CD8-positive, alpha-beta T cell (primary cell): ENCODE measurements at regions of chr4 and their contacts with region 1.

Region 1: GRCh38 chr4:102430461-102430910 is 70.7 kb upstream of the NFKB1 start:
- DNase-seq: peak in 1 of 9 experiments; percentile 19
- ATAC-seq: no peak
- H3K4me3 ChIP-seq: peak overlapping the region; percentile 57 to 58
- H3K4me3 Mint-ChIP-seq: peak overlapping the region; percentile 88
- H3K27ac ChIP-seq: peak overlapping the region; percentile 34 to 55
- H3K27ac Mint-ChIP-seq: no peak overlapping the region
- H3K4me1 ChIP-seq: peaks cover 4% of the 10 kb centered on the region
- H3K4me1 Mint-ChIP-seq: peaks cover 8% of the 10 kb centered on the region
- H3K27me3 ChIP-seq: no peaks in the 10 kb centered on the region
- H3K27me3 Mint-ChIP-seq: no peaks in the 10 kb centered on the region
- CTCF ChIP-seq: no peak

Region 2: GRCh38 chr4:102255454-102255853 is 175.0 kb before region 1 on chr4:
- CTCF ChIA-PET with region 1: interaction called, 6 read pairs
- POLR2A ChIA-PET with region 1: no interaction called
- intact Hi-C with region 1: loop called in 1 of 2 experiments (anchors 5 kb)
- DNase-seq: no peak
- ATAC-seq: no peak
- H3K4me3 ChIP-seq: no peak overlapping the region
- H3K4me3 Mint-ChIP-seq: no peak overlapping the region
- H3K27ac ChIP-seq: no peak overlapping the region
- H3K27ac Mint-ChIP-seq: no peak overlapping the region
- H3K4me1 ChIP-seq: no peaks in the 10 kb centered on the region
- H3K4me1 Mint-ChIP-seq: no peaks in the 10 kb centered on the region
- H3K27me3 ChIP-seq: no peaks in the 10 kb centered on the region
- H3K27me3 Mint-ChIP-seq: no peaks in the 10 kb centered on the region
- CTCF ChIP-seq: no peak

Region 3: DNA sequence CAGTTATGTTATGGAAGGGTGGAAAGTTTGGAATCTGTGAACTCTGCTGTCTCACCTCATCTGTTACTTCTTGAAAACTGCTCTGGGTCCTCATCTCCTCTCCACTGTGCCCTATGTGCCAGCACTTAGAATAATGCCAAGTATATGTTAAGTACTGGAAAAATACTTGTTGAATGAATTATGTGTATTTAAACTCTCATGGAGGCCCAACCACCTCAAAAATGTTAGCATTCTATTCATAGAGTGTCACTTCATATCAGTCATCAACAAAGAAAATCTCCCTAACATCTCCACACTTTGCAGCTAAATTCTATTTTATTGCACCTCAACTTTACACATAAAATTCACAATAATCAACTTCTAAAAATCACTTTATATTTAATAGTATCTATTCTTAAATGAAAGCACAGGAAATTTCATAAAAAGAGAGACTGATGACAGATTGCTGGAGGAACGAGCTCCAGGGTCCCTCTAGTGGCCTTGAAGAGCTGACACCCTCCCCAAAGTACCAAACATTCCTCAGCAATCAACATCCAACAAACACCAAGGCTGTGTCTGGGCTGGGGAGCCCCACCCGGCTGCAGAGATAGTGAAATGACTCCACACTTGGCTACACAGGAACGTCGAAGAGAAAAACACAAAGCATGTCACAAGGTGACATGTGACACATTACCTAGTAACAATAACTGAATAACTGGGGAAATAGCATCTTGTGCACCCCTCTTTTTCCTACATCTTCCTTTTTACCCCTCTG is 131.0 kb before region 1 on chr4:
- CTCF ChIA-PET with region 1: interaction called, 3 read pairs
- POLR2A ChIA-PET with region 1: no interaction called
- intact Hi-C with region 1: loop called in 1 of 2 experiments (anchors 5 kb)
- DNase-seq: peak in 7 of 9 experiments; percentile 2 to 53 (median 27)
- ATAC-seq: peak; percentile 67
- H3K4me3 ChIP-seq: no peak overlapping the region
- H3K4me3 Mint-ChIP-seq: no peak overlapping the region
- H3K27ac ChIP-seq: no peak overlapping the region
- H3K27ac Mint-ChIP-seq: no peak overlapping the region
- H3K4me1 ChIP-seq: no peaks in the 10 kb centered on the region
- H3K4me1 Mint-ChIP-seq: peaks cover 2% of the 10 kb centered on the region
- H3K27me3 ChIP-seq: no peaks in the 10 kb centered on the region
- H3K27me3 Mint-ChIP-seq: no peaks in the 10 kb centered on the region
- CTCF ChIP-seq: peak; percentile 66

Region 4: GRCh38 chr4:102760645-102761295 is 330.3 kb after region 1 on chr4 and contains the start of gene MANBA:
- CTCF ChIA-PET with region 1: no interaction called
- POLR2A ChIA-PET with region 1: no interaction called
- intact Hi-C with region 1: loop called in 1 of 2 experiments (anchors 5 kb)
- DNase-seq: peak; percentile 67 to 90 (median 84)
- ATAC-seq: peak; percentile 83
- H3K4me3 ChIP-seq: peak within 1 kb of the TSS; percentile 88 to 93
- H3K4me3 Mint-ChIP-seq: peak within 1 kb of the TSS; percentile 96
- H3K27ac ChIP-seq: peak within 1 kb of the TSS; percentile 62 to 65
- H3K27ac Mint-ChIP-seq: peak within 1 kb of the TSS; percentile 94
- H3K4me1 ChIP-seq: peaks cover 10% of the 10 kb centered on the region
- H3K4me1 Mint-ChIP-seq: peaks cover 42% of the 10 kb centered on the region
- H3K27me3 ChIP-seq: no peaks in the 10 kb centered on the region
- H3K27me3 Mint-ChIP-seq: no peaks in the 10 kb centered on the region
- CTCF ChIP-seq: no peak
- total RNA-seq, gene MANBA: 22.5 to 24.1 TPM

Region 5: GRCh38 chr4:102843273-102843672 is 412.8 kb after region 1 on chr4:
- CTCF ChIA-PET with region 1: no interaction called
- POLR2A ChIA-PET with region 1: no interaction called
- intact Hi-C with region 1: no loop called
- DNase-seq: no peak
- ATAC-seq: no peak
- H3K4me3 ChIP-seq: no peak overlapping the region
- H3K4me3 Mint-ChIP-seq: no peak overlapping the region
- H3K27ac ChIP-seq: no peak overlapping the region
- H3K27ac Mint-ChIP-seq: no peak overlapping the region
- H3K4me1 ChIP-seq: no peaks in the 10 kb centered on the region
- H3K4me1 Mint-ChIP-seq: no peaks in the 10 kb centered on the region
- H3K27me3 ChIP-seq: no peaks in the 10 kb centered on the region
- H3K27me3 Mint-ChIP-seq: no peaks in the 10 kb centered on the region
- CTCF ChIP-seq: no peak

Region 6: GRCh38 chr4:102868781-102869568 is 438.5 kb after region 1 on chr4 and contains the start of gene CISD2:
- CTCF ChIA-PET with region 1: no interaction called
- POLR2A ChIA-PET with region 1: no interaction called
- intact Hi-C with region 1: loop called in 1 of 2 experiments (anchors 5 kb)
- DNase-seq: peak; percentile 83 to 97 (median 91)
- ATAC-seq: peak; percentile 81
- H3K4me3 ChIP-seq: peak within 1 kb of the TSS; percentile 74 to 77
- H3K4me3 Mint-ChIP-seq: peak within 1 kb of the TSS; percentile 89
- H3K27ac ChIP-seq: peak within 1 kb of the TSS; percentile 89 to 94
- H3K27ac Mint-ChIP-seq: peak within 1 kb of the TSS; percentile 99
- H3K4me1 ChIP-seq: peaks cover 37% of the 10 kb centered on the region
- H3K4me1 Mint-ChIP-seq: peaks cover 66% of the 10 kb centered on the region
- H3K27me3 ChIP-seq: no peaks in the 10 kb centered on the region
- H3K27me3 Mint-ChIP-seq: no peaks in the 10 kb centered on the region
- CTCF ChIP-seq: no peak
- total RNA-seq, gene CISD2: 14.3 to 14.4 TPM

Region 7: DNA sequence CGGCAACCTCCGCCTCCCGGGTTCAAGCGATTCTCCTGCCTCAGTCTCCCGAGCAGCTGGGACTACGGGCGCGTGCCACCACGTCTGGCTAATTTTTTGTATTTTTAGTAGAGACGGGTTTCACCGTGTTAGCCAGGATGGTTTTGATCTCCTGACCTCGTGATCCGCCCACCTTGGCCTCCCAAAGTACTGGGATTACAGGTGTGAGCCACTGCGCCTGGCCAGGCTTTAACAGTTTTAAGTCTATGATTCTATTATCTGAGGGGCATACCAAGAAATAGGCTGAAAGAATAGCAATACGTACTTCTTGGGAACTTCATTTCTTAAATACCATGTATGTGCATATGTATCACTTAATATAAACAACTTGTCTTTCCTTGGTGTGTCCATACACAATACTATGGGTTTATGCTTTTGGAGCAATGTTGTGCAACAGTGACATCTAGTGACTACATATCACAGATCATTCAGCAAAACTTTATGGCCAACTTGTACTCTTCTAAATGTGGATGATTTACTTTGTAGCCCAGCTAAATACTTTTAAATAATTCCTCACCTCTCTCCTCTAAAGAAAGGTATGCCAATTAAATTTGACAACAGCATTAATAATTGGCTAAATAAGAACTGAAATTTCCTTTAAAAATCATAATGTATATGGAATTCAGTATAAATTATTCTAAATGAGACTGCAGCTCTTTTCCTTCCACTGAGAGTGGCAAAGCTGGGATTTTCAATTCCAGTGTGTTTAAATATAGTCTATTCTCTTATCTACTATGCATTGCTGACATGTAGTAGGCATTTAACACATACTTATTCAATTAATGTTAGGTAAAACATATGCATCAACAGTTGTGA is 578.6 kb after region 1 on chr4:
- CTCF ChIA-PET with region 1: interaction called, 7 read pairs
- POLR2A ChIA-PET with region 1: no interaction called
- intact Hi-C with region 1: loop called (anchors 1 to 5 kb)
- DNase-seq: peak in 3 of 9 experiments; percentile 19 to 82 (median 75)
- ATAC-seq: peak; percentile 97
- H3K4me3 ChIP-seq: no peak overlapping the region
- H3K4me3 Mint-ChIP-seq: no peak overlapping the region
- H3K27ac ChIP-seq: no peak overlapping the region
- H3K27ac Mint-ChIP-seq: no peak overlapping the region
- H3K4me1 ChIP-seq: no peaks in the 10 kb centered on the region
- H3K4me1 Mint-ChIP-seq: peaks cover 2% of the 10 kb centered on the region
- H3K27me3 ChIP-seq: no peaks in the 10 kb centered on the region
- H3K27me3 Mint-ChIP-seq: no peaks in the 10 kb centered on the region
- CTCF ChIP-seq: peak; percentile 85

Region 8: DNA sequence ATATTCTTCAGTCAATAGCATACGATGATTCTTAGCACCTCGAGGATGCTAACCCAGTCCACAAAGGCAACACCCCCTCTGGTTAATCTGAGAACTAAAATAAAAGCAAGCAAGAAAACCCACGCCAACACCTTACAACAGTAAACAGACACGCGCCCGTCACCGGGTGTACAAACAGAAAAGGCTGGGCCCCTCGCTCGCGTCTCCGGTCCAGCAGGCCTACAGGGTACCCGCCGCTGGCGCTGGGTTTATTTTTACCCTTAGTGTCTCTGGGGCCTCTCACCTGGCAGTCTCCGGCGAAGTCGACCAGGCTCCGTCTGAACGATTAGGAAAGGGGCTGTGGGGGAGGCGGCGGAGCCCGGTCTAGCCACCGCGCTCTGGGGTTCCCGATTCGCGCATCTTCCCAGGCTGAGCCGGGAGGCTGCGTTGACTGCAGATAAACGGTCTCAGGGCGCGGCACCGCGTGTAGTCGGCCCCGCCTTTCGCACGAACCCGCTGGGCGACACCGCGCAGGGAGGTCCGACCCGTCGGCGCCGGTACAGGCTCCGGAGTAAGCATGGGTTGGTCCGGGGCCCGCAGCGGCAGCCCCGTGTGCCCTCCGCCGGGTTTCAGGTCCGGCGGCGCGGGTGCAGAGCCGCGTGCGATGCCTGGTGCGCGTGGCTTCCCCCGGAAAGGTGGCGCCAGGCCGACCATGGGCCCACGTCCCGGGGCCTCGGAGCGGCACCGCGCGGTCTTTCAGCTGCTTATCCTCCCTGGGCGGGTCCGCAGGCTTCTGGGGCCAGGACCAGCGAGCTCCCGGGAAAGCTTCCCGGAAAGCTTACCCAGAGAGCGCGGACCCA is 645.6 kb after region 1 on chr4:
- CTCF ChIA-PET with region 1: no interaction called
- POLR2A ChIA-PET with region 1: no interaction called
- intact Hi-C with region 1: loop called in 1 of 2 experiments (anchors 1 kb)
- DNase-seq: peak; percentile 39 to 84 (median 64)
- ATAC-seq: peak; percentile 79
- H3K4me3 ChIP-seq: peak overlapping the region; percentile 80
- H3K4me3 Mint-ChIP-seq: peak overlapping the region; percentile 94
- H3K27ac ChIP-seq: peak overlapping the region; percentile 89 to 95
- H3K27ac Mint-ChIP-seq: peak overlapping the region; percentile 99
- H3K4me1 ChIP-seq: peaks cover 25% of the 10 kb centered on the region
- H3K4me1 Mint-ChIP-seq: peaks cover 49% of the 10 kb centered on the region
- H3K27me3 ChIP-seq: no peaks in the 10 kb centered on the region
- H3K27me3 Mint-ChIP-seq: no peaks in the 10 kb centered on the region
- CTCF ChIP-seq: no peak